Activated CD4-positive, alpha-beta memory T cell treated with anti-CD3 and anti-CD28 coated beads for 36 hours (primary cell): ENCODE measurements at regions of chr3 and their contacts with region 1.

Region 1: DNA sequence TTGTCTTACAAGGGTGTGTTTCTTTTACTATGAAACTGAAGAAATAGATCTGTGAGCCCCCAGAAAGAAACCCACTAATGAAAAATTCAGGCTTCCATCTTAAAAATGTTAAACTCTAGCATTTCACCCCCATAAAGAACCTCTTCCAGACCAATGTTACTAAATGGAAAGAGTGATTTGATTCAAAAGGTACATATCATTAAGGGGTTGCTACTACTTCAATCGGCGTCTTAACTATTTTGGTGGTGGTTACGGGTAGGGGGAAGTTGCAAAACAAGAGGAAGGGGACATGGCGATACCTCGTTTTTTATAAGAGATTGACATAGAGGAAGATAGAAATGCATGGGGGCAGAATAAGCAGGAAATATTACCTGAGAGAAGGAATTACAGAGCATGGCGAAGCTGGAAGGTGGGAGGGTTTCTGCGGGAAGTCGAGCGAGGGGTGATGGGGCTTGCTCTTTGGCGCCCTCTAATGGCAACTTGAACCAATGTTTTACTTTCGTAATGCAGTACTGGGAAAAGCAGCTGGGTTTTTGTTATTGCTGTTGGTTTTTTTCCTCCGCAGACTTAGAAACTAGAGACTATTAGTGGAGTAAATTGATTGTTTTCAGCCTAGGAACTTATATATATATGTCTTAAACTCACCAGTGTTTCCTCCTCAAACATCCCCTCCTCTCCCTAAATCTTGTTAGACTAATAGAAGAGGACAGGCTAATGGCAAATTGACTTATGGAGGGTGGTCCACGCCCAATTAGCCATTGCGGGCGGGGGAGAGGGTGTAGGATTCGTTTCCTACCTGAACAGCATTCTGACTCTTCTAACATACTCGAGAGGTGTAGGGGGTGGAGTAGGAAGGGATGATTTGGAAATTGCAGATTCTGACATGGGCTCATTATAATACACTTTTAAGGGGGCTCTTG is 11.3 kb upstream of the SOX2 start:
- DNase-seq: peak; percentile 58
- H3K4me3 Mint-ChIP-seq: peak overlapping the region; percentile 21
- H3K27ac Mint-ChIP-seq: no peak overlapping the region
- H3K4me1 Mint-ChIP-seq: peaks cover 32% of the 10 kb centered on the region
- H3K27me3 Mint-ChIP-seq: peaks cover 82% of the 10 kb centered on the region

Region 2: DNA sequence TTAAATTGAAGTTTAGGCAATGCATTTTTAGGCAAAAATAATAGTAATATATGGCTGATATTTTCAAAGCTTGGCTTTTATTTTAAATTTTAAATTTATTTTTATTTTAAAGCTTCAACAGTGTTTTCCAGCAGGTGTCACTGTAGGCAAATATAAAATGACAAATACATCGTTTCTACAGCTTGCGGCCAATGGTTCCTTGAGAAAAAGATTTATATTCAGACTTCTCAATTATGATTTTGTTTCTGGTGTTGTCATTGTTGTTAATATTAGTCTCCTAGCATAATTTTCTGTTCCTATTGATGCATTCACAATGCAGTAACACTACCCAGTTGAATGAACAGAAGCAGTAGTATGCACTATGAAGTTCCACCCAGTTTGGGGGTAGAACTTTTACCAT is 490.2 kb before region 1 on chr3:
- CTCF ChIA-PET with region 1: interaction called, 3 read pairs
- POLR2A ChIA-PET with region 1: no interaction called
- intact Hi-C with region 1: loop called (anchors 5 kb)
- DNase-seq: no peak
- H3K4me3 Mint-ChIP-seq: no peak overlapping the region
- H3K27ac Mint-ChIP-seq: no peak overlapping the region
- H3K4me1 Mint-ChIP-seq: no peaks in the 10 kb centered on the region
- H3K27me3 Mint-ChIP-seq: peaks cover 5% of the 10 kb centered on the region

Region 3: GRCh38 chr3:181344331-181344730 is 356.1 kb before region 1 on chr3:
- CTCF ChIA-PET with region 1: no interaction called
- POLR2A ChIA-PET with region 1: no interaction called
- intact Hi-C with region 1: no loop called
- DNase-seq: no peak
- H3K4me3 Mint-ChIP-seq: no peak overlapping the region
- H3K27ac Mint-ChIP-seq: no peak overlapping the region
- H3K4me1 Mint-ChIP-seq: no peaks in the 10 kb centered on the region
- H3K27me3 Mint-ChIP-seq: no peaks in the 10 kb centered on the region

Region 4: DNA sequence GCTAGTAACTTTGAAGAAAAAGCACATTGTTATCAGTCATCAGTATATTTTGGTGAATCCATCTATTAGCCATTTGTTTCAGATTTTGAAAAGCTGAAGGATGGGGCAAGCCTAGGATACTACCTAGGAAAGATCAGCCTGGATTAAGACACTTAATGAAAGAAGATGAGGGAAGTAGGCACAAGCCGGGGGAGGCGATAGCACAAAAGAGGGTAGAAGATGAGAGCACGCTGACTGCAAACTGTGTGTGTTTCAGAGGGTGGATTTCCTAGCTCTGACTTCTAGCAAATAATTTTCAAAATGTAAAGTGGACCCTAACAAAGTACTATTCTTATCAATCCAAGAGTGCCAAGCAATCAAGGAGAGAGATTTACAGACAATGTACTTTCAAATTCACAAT is 10.9 kb before region 1 on chr3:
- CTCF ChIA-PET with region 1: interaction called, 10 read pairs
- POLR2A ChIA-PET with region 1: no interaction called
- intact Hi-C with region 1: no loop called
- DNase-seq: no peak
- H3K4me3 Mint-ChIP-seq: no peak overlapping the region
- H3K27ac Mint-ChIP-seq: no peak overlapping the region
- H3K4me1 Mint-ChIP-seq: no peaks in the 10 kb centered on the region
- H3K27me3 Mint-ChIP-seq: peaks cover 12% of the 10 kb centered on the region

Region 5: DNA sequence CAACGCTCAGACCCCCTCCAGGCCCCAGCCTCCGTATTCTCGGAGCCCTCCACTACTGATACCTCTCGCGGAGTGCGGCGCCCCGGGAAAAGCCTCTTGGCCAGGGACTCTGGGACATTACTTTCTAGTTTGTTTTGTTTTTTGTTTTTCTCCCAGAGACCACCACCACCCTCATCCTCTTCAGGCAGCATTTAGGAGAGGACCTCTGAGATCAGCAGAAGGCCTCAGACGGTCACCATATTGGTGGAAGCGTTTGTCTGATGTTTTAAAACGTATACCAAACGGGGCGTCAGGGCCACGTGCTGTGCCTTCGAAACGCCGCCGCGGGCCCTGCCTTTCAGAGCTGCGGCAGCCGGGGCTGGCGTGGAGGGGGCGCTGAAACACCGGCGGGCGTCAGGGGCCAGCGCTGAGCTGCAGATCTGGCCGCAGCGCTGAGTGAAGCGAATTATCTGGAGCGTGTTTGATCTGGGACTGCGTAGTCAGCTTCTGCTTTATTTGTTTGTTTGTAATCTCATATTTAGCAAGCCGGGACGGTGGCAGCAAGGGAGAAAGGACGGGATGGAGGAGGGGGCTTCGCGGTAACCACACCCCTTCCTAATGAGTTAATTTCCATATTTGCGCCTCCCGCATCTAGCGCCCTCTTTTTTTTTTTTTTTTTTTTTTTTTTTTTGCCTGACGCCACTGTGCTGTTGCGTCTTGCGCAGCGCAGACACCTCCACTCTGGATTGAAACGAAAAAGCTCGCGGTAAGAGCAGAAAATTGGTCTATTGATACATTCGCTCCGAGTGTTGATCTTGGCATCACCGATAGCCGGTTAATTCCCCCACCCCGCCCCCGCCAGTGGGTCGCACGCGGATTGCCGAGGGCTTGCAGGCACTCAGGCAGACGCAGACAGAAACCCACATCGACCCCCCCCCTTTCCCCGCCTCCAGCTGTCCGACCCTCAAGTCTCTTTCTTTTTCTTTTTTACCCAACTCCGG is 26.2 kb after region 1 on chr3:
- CTCF ChIA-PET with region 1: interaction called, 10 read pairs
- POLR2A ChIA-PET with region 1: no interaction called
- intact Hi-C with region 1: loop called (anchors 2 kb)
- DNase-seq: no peak
- H3K4me3 Mint-ChIP-seq: peak overlapping the region; percentile 41
- H3K27ac Mint-ChIP-seq: peak overlapping the region; percentile 33
- H3K4me1 Mint-ChIP-seq: peaks cover 15% of the 10 kb centered on the region
- H3K27me3 Mint-ChIP-seq: peaks cover 89% of the 10 kb centered on the region

Region 6: DNA sequence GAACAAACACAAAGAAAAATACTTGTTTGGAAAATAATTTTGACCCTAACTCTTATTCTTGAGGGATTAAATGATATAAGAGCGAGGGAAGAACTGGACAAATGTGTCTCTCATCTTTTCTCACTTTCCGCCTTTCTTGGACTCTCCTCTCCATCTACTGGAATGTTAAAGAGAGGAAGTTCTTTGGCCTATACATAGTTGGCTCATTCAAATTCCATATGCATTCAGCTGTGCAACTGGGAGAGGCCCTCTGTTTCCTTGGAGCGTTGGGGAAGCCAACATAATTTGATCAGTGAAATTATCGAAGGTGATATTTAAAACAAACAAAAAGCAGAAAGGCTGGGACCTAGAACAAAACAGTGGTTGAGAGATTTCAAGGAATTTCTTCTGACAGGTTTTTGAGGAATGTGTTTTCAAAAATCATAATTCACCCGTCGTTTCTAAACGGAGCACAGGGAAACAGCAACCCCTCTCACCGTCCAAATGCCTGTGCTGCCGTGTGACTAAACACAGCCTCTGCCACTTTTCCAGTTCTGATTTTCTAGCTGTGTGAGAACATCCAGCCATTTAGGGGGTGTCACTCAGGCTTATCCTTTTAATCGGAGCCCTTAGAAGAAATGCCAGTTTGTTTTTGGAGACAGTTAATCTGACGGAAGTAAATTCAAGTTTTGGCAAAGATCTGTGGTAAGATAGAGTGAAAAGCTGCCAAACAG is 501.2 kb after region 1 on chr3:
- CTCF ChIA-PET with region 1: no interaction called
- POLR2A ChIA-PET with region 1: no interaction called
- intact Hi-C with region 1: no loop called
- DNase-seq: no peak
- H3K4me3 Mint-ChIP-seq: no peak overlapping the region
- H3K27ac Mint-ChIP-seq: no peak overlapping the region
- H3K4me1 Mint-ChIP-seq: no peaks in the 10 kb centered on the region
- H3K27me3 Mint-ChIP-seq: no peaks in the 10 kb centered on the region